GM13976 (cell line): ENCODE measurements at regions of chr9 and their contacts with region 1.

Region 1: DNA sequence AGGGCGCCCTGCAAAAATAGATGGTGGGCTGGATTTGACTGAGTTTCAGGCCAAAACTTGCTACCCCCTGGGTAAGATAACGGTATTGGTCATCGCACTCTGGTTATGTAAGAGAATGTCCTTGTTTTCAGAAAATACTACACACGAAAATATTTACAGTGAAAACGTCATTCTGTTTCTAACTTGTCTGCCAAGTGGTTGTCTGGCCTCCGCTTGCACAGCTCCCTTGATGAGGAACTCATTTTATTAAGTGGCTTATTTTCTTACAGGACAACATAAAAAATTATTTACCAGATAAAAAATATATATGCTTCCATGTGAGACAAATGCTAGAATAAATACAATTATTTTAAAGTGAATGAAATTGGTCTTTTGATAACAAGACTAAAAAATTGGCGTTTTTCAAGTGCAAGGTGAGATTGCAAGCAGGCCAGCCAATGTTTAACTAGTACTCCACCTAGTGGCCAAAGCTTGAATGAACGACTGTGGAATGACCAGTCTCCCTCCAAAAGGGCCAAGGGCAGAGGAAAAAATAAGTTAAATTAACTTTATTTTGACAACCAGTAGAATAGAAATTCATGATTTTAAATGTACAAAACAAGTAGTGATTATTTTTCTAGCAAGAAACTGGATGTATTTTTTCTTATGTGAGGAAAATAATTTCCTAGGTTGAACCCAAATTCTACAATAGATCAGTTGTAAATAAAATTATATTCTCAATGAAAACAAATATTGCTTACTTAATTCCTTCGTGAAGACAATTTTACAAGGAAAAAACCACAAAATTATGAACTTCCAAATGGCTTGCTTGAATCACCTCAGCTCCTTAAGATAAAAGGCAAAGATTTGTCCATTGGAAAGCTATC is 93.2 kb downstream of the ZFAND5 start:
- DNase-seq: peak; percentile 67
- CTCF ChIP-seq: peak; percentile 61

Region 2: GRCh38 chr9:71806901-71807307 is 464.9 kb before region 1 on chr9:
- in situ Hi-C with region 1: loop called (anchors 25 kb)
- DNase-seq: peak; percentile 53
- CTCF ChIP-seq: peak; percentile 84

Region 3: DNA sequence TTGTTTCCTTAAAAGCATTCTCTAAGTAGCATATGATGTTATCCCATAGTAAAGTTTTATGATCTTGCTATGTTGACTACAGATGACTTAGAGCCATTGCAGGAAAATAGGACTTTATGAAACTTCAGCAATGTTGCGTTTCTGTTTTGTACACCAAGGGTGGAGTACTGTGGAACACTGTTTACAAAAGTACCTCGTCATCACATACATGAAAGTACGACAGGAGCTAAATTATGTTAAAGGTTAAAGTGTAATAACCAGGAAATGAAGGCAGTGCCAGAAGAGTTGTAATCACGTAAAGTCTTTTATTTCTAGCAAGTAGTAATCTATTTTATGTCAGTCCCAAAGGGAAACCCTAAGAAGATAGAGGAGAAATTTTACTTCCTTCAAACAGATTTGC is 309.5 kb before region 1 on chr9:
- in situ Hi-C with region 1: no loop called
- DNase-seq: no peak
- CTCF ChIP-seq: no peak

Region 4: GRCh38 chr9:72203205-72203803 is 68.5 kb before region 1 on chr9:
- in situ Hi-C with region 1: loop called (anchors 10 kb)
- DNase-seq: peak; percentile 45
- CTCF ChIP-seq: peak; percentile 49